Heart right ventricle (tissue), 16 donors: ENCODE measurements at regions of chr5 and their contacts with region 1.

Region 1: DNA sequence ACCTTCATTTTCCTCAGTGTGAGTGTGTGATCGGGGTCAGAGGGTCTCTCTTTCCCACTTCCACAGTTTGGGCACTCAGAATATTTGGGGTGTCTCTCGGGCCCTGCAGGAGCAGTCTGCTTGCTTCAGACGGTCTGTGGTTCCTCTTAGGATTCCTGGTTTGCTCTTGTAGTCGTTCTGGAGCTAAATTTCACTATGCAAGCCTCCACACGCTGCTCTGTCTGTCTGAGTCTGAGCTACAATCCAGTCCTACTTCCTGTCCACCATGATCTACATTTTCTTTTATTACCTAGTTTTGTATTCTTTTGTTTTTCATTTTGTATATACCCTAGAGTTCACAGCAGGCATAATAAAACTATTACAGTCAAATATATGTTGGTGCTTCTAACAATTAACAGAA is 1967.3 kb upstream of the NUDT12 start:
- DNase-seq: no peak
- ATAC-seq: no peak
- H3K4me3 ChIP-seq: no peak overlapping the region
- H3K27ac ChIP-seq: no peak overlapping the region
- H3K4me1 ChIP-seq: no peaks in the 10 kb centered on the region
- H3K27me3 ChIP-seq: no peaks in the 10 kb centered on the region
- CTCF ChIP-seq: no peak

Region 2: DNA sequence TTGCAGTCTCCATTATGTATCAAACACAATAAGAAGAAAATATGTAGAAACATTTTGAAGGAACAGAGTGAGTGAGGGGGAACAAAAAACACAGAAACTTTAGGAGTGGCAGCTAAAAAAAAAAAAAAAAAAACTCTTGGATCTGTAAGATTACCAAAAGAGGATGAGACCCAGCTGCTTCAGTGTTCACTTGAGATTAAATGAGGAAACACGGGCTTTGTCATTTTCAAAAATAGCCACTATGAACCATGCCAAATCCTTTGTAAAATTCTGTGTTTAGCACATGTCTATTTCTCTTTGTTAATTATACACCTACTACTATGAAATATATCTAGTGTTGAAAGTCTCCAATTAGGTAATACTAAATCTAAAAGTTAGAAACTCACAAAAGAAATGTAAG is 1655.0 kb after region 1 on chr5:
- intact Hi-C with region 1: loop called in 1 of 10 experiments (anchors 5 kb)
- DNase-seq: no peak
- ATAC-seq: no peak
- H3K4me3 ChIP-seq: no peak overlapping the region
- H3K27ac ChIP-seq: no peak overlapping the region
- H3K4me1 ChIP-seq: no peaks in the 10 kb centered on the region
- H3K27me3 ChIP-seq: no peaks in the 10 kb centered on the region
- CTCF ChIP-seq: no peak